ENCODE measurements at regions of chr6 and their contacts with region 1.

Region 1: DNA sequence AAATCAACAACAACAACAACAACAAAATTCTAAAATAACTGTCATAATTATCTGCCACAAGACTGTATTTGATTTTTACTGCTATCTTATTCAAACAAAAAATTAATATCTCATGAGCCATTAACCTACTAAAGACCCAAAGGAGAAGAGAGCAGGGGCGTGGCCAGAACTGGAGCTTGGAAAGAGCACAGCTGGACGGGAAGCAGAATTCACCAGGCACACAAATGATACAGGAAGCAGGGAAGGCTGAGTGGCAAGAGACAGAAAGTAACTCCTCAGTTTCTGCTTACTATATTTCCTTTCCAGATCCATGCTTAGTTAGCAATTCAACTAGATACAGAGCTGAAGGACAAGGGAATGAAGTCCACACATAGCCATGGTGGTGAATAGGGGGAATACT is 54.4 kb downstream of the FKBP5 start:
- DNase-seq: peak; percentile 38 to 71 (median 46)
- ATAC-seq: peak; percentile 61
- H3K4me3 ChIP-seq: no peak overlapping the region
- H3K27ac ChIP-seq: peak overlapping the region; percentile 19 to 62 (median 34)
- H3K4me1 ChIP-seq: peaks cover 48% of the 10 kb centered on the region
- H3K27me3 ChIP-seq: no peaks in the 10 kb centered on the region
- CTCF ChIP-seq: no peak
- POLR2A ChIP-seq: no peak

Region 2: DNA sequence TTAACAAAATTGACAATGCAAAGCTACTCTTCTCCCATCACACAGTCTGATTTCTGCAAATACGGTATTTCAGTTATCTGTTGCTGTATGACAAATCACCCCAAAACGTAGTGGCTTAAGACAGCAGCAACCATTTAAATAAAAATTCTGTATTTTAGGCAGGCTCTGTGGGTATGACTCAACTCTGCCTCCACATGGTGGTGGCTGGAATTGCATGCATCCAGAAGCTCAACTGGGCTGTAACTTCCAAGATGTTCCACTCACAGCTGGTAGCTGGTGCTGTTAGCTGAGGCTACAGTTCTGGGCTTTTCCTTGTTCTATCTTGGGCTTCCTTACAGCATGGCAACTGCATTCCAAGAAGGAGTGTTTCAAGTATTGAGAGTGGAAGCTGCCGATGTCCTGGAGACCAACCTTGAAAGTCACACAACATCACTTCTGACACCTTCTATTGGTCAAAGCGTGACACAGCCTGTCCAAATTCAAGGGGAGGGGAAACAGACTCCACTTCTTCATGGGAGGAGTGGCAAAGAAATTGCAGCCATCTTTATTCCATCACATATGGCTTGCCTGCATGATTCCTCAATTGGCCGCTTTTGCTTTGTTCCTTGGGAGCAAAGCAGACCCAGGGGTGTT is 81.9 kb before region 1 on chr6:
- intact Hi-C with region 1: no loop called
- DNase-seq: peak; percentile 39 to 68 (median 52)
- ATAC-seq: peak; percentile 56
- H3K4me3 ChIP-seq: no peak overlapping the region
- H3K27ac ChIP-seq: no peak overlapping the region
- H3K4me1 ChIP-seq: no peaks in the 10 kb centered on the region
- H3K27me3 ChIP-seq: no peaks in the 10 kb centered on the region
- CTCF ChIP-seq: peak; percentile 52 to 75 (median 66)
- POLR2A ChIP-seq: no peak

Region 3: GRCh38 chr6:35583893-35584688 is 50.2 kb before region 1 on chr6:
- intact Hi-C with region 1: loop called (anchors 10 kb)
- DNase-seq: peak; percentile 77 to 84 (median 81)
- ATAC-seq: peak; percentile 79
- H3K4me3 ChIP-seq: no peak overlapping the region
- H3K27ac ChIP-seq: peak overlapping the region in 2 of 4 donors; percentile 5 to 14
- H3K4me1 ChIP-seq: peaks cover 19% of the 10 kb centered on the region
- H3K27me3 ChIP-seq: no peaks in the 10 kb centered on the region
- CTCF ChIP-seq: peak; percentile 41 to 90 (median 75)
- POLR2A ChIP-seq: no peak

Region 4: GRCh38 chr6:35688581-35689322 is 54.4 kb after region 1 on chr6 and contains the start of gene FKBP5:
- intact Hi-C with region 1: loop called (anchors 10 kb)
- DNase-seq: peak; percentile 94 to 97 (median 96)
- ATAC-seq: peak; percentile 93
- H3K4me3 ChIP-seq: peak within 1 kb of the TSS; percentile 56 to 85
- H3K27ac ChIP-seq: peak within 1 kb of the TSS; percentile 84 to 95 (median 94)
- H3K4me1 ChIP-seq: peaks cover 35% of the 10 kb centered on the region
- H3K27me3 ChIP-seq: no peaks in the 10 kb centered on the region
- CTCF ChIP-seq: peak in 2 of 7 experiments; percentile 8 to 12
- POLR2A ChIP-seq: peak; percentile 63 to 95 (median 80)
- total RNA-seq, gene FKBP5: 133 to 138 TPM